ENCODE measurements at regions of chr9 and their contacts with region 1.

Region 1: DNA sequence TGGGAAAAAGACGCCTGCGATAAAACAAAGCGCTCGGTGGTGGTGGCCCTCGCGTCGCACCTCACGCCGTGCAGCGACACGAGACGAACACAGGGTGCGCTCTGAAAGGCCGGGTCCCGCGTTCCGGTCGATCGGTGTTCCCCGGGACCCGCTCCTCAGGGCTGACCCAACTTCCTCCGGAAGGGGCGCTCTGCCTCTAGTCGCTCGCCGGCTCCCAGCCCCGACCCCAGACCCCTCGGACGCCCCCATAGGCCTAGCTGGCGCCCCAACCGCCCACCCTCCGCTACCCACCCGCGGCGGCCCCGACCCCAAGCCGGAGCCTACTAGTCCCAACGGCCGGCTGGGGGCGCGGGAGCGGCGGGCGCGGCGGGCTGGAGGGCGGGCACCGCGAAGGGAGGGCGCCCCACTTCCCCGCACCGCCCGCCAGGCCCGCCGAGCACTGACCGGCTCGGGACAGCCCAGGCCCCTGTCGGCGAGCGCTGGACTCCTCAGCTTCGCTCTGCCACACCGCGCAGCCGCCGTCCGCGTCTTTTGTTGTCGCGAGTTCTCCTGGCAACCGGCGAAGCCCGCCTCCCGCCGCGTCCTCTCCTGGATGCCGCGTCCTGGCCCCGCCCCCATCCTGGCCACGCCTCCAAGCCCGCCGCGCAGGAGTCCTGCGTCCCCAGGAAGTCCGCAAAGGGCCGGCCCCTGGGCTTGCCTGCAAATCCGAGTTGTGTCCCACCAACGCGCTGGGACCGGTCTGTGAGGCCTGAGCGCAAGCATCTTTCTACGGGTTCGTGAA is at the start of gene KIF27:
- DNase-seq: peak; percentile 96
- H3K4me3 ChIP-seq: peak within 1 kb of the TSS; percentile 52
- H3K4me3 Mint-ChIP-seq: peak within 1 kb of the TSS; percentile 71
- H3K27ac Mint-ChIP-seq: peak within 1 kb of the TSS; percentile 82
- H3K4me1 ChIP-seq: no peaks in the 10 kb centered on the region
- H3K4me1 Mint-ChIP-seq: no peaks in the 10 kb centered on the region
- H3K27me3 ChIP-seq: no peaks in the 10 kb centered on the region
- H3K27me3 Mint-ChIP-seq: no peaks in the 10 kb centered on the region
- CTCF ChIP-seq: peak; percentile 29 to 42
- total RNA-seq, gene KIF27: 1.8 and 2.0 TPM in 2 replicates

Region 2: DNA sequence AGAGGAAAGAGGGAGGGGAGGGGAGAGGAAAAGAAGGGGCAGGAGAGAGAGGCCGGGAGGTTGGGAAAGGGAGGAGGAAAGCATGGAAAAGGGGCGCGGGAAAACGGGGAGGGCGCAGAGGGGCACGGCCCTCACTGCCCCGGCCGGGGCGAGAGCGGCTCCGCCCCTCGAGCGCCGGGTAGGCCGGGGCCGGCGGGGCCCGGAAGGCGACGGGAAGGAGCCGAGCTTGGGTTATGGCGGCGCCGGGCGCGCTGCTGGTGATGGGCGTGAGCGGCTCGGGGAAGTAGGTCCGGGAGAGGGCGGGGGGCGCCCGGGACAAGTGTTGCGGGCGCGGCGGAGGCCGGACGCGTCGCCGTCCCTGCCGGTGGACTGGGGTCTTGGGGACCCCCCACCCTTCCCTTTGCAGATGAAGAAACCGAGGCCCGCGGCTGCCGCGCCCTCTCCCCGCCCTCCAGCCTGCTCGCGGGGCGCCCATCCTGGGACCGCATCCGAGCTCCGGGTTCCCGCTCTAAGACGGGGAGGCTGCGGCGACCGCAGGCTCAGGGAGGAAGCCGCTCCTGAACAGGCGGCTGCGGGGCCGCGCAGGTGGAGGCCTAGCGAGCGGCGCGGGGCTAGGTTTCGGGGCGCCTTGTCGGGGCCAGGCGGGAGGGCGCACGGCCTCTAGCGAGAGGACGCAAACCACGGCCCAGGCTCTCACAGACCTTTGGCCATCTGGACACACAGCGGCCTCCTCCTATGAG is 298.0 kb before region 1 on chr9 and contains the start of gene IDNK:
- CTCF ChIA-PET with region 1: no interaction called
- POLR2A ChIA-PET with region 1: no interaction called
- intact Hi-C with region 1: loop called (anchors 10 kb)
- DNase-seq: peak; percentile 59 to 77
- H3K4me3 ChIP-seq: peak within 1 kb of the TSS; percentile 65
- H3K4me3 Mint-ChIP-seq: peak within 1 kb of the TSS; percentile 84
- H3K27ac Mint-ChIP-seq: peak within 1 kb of the TSS; percentile 83
- H3K4me1 ChIP-seq: peaks cover 14% of the 10 kb centered on the region
- H3K4me1 Mint-ChIP-seq: peaks cover 20% of the 10 kb centered on the region
- H3K27me3 ChIP-seq: no peaks in the 10 kb centered on the region
- H3K27me3 Mint-ChIP-seq: no peaks in the 10 kb centered on the region
- CTCF ChIP-seq: no peak
- total RNA-seq, gene IDNK: 4.3 and 5.1 TPM in 2 replicates

Region 3: DNA sequence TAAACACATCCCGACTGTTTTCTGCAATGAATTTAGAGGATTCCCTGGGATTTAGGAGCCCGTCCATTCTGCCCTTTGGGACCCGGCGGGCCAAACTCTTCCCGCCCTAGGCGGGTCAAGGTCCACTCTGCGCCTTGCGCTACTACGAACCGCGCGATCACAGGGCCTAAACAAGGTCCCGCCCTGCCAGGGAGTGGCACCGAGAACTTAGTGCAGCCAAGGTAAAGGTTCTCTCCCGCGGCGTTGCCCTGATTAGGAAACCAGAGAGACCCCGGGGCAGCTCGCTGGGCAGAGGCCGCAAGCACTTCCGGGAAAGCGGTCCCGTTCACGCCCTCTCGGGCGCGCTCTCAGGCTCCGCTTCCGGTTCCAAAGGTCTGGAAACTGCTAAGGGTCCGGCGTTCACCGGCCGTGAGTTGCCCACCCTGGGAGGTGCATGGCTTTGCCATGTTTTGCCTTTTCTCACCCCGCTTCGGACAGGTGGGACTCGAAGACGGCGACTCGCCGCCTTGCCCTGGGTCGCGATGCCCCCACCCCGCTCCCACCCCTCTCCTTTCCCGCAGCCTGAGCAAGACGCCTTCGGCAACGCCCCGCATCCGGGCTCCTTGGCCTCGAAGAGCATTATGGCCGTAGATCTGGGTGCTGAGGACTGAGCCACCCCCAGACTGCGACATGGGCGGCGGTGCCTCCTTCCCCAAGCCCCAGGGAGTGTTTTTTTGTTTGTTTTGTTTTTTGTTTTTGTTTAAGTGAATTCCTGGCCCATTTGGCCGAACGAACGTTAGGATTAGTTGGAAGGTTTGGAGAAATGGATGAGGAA is 35.5 kb after region 1 on chr9:
- CTCF ChIA-PET with region 1: no interaction called
- POLR2A ChIA-PET with region 1: no interaction called
- intact Hi-C with region 1: loop called (anchors 5 kb)
- DNase-seq: peak; percentile 80 to 87
- H3K4me3 ChIP-seq: peak overlapping the region; percentile 70
- H3K4me3 Mint-ChIP-seq: peak overlapping the region; percentile 99
- H3K27ac Mint-ChIP-seq: peak overlapping the region; percentile 98
- H3K4me1 ChIP-seq: no peaks in the 10 kb centered on the region
- H3K4me1 Mint-ChIP-seq: no peaks in the 10 kb centered on the region
- H3K27me3 ChIP-seq: no peaks in the 10 kb centered on the region
- H3K27me3 Mint-ChIP-seq: no peaks in the 10 kb centered on the region
- CTCF ChIP-seq: no peak

Region 4: GRCh38 chr9:83980395-83981125 is 59.4 kb after region 1 on chr9 and contains the start of gene RMI1:
- CTCF ChIA-PET with region 1: no interaction called
- POLR2A ChIA-PET with region 1: no interaction called
- intact Hi-C with region 1: loop called (anchors 2 kb)
- DNase-seq: peak; percentile 94 to 96
- H3K4me3 ChIP-seq: peak within 1 kb of the TSS; percentile 86
- H3K4me3 Mint-ChIP-seq: peak within 1 kb of the TSS; percentile 95
- H3K27ac Mint-ChIP-seq: peak within 1 kb of the TSS; percentile 100
- H3K4me1 ChIP-seq: peaks cover 16% of the 10 kb centered on the region; the same call in 1 of the 2 replicates
- H3K4me1 Mint-ChIP-seq: peaks cover 3% of the 10 kb centered on the region
- H3K27me3 ChIP-seq: no peaks in the 10 kb centered on the region
- H3K27me3 Mint-ChIP-seq: no peaks in the 10 kb centered on the region
- CTCF ChIP-seq: no peak
- total RNA-seq, gene RMI1: 10.2 and 10.8 TPM in 2 replicates

Region 5: GRCh38 chr9:84261082-84261746 is 340.1 kb after region 1 on chr9:
- CTCF ChIA-PET with region 1: no interaction called
- POLR2A ChIA-PET with region 1: no interaction called
- intact Hi-C with region 1: loop called (anchors 1 kb)
- DNase-seq: peak; percentile 63 to 67
- H3K4me3 ChIP-seq: no peak overlapping the region
- H3K4me3 Mint-ChIP-seq: no peak overlapping the region
- H3K27ac Mint-ChIP-seq: no peak overlapping the region
- H3K4me1 ChIP-seq: no peaks in the 10 kb centered on the region
- H3K4me1 Mint-ChIP-seq: no peaks in the 10 kb centered on the region
- H3K27me3 ChIP-seq: no peaks in the 10 kb centered on the region
- H3K27me3 Mint-ChIP-seq: no peaks in the 10 kb centered on the region
- CTCF ChIP-seq: peak; percentile 65 to 69

Region 6: DNA sequence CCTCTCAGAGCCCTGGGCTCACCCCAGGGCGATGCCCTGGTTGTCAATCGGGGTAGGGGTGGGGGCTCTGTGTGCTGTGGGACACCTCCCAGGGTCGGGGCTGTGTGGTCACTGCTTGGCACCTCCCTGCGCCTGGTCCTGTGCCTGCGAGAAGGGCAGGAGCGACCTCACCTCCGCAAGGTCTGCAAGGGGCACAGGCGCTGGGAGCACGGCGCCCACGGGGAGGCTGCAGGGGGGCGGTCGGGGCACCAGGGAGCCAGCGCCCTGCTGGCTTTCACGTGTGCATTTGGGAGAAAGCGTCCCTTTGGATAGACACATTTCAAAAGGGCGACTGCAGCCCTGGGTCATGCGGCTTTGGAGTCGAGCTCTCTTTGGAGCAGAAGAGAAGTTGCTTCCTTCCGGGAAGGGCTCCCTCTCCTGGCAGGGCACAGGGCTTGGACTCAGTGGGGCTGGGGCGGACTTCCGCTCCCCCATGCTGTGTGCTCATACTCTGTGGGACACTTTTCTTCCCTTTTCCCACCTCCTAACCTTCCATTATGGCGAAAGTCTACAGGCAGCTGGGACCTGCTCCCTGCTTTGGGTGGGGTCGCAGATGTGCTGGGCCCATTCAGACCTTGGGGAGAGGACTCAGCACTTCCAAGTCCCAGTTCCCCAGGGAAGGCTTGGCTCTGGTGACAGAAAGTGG is 472.3 kb after region 1 on chr9:
- CTCF ChIA-PET with region 1: no interaction called
- POLR2A ChIA-PET with region 1: no interaction called
- intact Hi-C with region 1: no loop called
- DNase-seq: no peak
- H3K4me3 ChIP-seq: no peak overlapping the region
- H3K4me3 Mint-ChIP-seq: no peak overlapping the region
- H3K27ac Mint-ChIP-seq: no peak overlapping the region
- H3K4me1 ChIP-seq: no peaks in the 10 kb centered on the region
- H3K4me1 Mint-ChIP-seq: no peaks in the 10 kb centered on the region
- H3K27me3 ChIP-seq: no peaks in the 10 kb centered on the region
- H3K27me3 Mint-ChIP-seq: no peaks in the 10 kb centered on the region
- CTCF ChIP-seq: no peak

Measured in Caco-2 (cell line).